Activated naive CD4-positive, alpha-beta T cell treated with anti-CD3 and anti-CD28 coated beads, Interleukin-2, amount 10 ng/mL, durations not matched to agents 7 days and 5 days (primary cell): ENCODE measurements at regions of chr17 and their contacts with region 1.

Region 1: DNA sequence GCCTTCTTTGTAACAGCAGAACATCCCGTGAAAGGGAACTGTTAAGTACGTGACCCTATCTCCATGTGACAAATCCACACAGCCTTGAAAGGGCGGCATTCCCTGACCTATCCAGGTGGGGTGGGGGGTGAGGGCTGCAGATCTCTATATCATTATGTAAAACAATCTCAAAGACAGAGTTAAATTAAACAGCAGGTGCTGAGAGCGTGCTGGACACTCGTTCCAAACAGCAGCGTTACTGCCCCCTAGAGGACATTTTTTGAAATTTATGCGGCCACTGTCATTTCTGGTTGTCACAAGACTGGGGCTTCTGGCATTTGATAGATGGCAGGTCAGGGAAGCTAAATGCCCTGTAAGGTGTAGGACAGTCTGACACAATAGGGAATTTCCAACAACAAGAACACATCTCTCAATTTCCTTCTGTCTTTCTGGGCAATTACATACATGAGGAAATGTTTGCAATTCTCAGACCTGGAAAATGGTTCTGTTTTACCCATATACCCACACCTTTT is 6.7 kb upstream of the SLC25A39 start:
- DNase-seq: peak; percentile 84
- H3K4me3 Mint-ChIP-seq: no peak overlapping the region
- H3K27ac Mint-ChIP-seq: no peak overlapping the region
- H3K4me1 Mint-ChIP-seq: peaks cover 19% of the 10 kb centered on the region
- H3K27me3 Mint-ChIP-seq: peaks cover 19% of the 10 kb centered on the region

Region 2: DNA sequence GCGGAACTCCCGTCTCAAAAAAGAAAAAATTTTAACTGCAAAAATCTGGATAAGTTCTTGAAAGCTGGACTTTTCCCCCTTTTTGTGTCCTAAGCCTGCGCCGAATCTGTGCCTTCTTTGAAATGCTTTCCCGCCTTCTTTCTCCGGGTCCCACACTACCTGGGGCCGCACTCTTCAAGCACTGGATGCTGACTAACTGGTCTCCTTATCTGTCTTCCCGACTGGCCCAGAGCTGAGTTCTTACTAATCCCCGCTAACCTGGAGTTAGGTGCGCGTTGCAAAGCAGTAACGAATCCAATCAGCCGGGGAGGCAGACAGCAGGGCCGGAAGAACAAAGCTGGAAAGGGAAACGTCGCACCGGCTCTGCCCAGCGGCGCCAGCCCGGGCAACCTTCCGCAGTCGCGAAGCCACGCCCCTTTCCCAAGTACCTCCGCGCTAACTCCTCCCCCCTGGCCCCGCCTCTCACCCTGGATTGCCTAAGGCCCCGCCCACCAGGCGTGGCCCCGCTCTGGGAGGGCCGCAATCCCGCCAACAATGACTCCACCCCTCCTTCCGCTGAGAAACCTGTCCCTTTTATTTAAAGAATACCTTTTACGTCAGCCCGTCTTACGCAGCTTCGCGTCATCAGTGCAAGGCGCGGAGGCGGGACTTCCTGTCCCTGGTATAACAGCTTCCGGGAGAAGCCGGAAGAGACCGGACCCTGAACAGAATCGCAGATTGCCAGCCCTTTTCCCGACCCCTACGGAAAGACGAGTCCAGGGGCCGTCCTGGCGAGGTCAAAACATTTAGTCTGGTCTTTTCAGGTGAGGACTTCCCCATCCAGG is 144.8 kb before region 1 on chr17 and contains the start of gene TMUB2:
- CTCF ChIA-PET with region 1: interaction called, 18 read pairs
- DNase-seq: peak; percentile 100
- H3K4me3 Mint-ChIP-seq: peak within 1 kb of the TSS; percentile 100
- H3K27ac Mint-ChIP-seq: peak within 1 kb of the TSS; percentile 97
- H3K4me1 Mint-ChIP-seq: peaks cover 51% of the 10 kb centered on the region
- H3K27me3 Mint-ChIP-seq: no peaks in the 10 kb centered on the region

Region 3: DNA sequence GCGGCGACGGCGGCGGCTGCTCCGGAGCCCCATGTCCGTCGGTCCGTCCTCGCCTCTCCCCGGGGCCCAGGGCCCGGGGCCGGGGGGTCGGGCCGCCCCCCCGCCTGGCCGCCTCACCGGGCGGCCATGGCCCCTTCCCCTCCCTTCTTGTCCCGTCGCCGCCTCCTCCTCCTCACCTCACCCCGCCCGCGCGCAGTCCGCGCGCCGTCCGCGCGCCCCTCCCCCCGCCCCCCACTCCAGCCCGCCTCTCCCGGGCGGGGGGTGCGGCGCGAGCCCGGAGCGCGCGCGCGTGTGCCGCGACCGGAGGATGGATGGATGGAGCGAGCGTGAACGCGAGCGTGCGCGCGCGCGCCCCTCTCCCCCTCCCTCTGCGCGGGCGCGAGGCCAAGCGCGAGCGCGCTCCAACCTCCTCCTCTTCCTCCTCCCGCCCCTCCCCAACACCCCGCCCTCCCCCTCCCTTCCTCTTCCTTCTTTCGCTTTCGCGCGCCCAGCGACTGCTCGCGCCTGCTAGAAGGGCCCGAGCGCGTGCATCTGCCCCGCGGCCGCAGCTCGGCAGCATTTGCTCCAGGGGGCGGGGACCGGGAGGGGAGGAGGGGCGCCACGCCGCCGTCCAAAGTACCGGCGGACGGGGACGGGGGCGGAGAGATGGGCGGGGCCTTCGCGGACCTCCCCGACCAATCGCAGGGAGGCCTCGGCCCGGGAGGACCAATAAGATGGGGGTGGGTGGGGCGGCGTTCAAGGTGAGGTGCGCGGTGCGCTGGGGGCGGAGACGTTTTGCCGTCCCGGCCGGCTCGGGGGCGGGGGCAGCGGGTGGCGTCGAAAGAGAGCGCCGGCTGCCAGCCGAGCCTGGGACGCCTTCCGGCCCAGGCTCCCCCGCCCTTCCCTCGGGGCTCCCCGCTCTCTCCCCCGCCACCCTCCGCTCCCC is 131.5 kb before region 1 on chr17 and contains the start of gene ATXN7L3:
- CTCF ChIA-PET with region 1: interaction called, 27 read pairs
- DNase-seq: peak; percentile 100
- H3K4me3 Mint-ChIP-seq: peak within 1 kb of the TSS; percentile 93
- H3K27ac Mint-ChIP-seq: peak within 1 kb of the TSS; percentile 99
- H3K4me1 Mint-ChIP-seq: peaks cover 57% of the 10 kb centered on the region
- H3K27me3 Mint-ChIP-seq: no peaks in the 10 kb centered on the region

Region 4: GRCh38 chr17:44210342-44211192 is 120.7 kb before region 1 on chr17:
- CTCF ChIA-PET with region 1: interaction called, 47 read pairs
- DNase-seq: peak; percentile 93
- H3K4me3 Mint-ChIP-seq: peak overlapping the region; percentile 53
- H3K27ac Mint-ChIP-seq: peak overlapping the region; percentile 85
- H3K4me1 Mint-ChIP-seq: peaks cover 59% of the 10 kb centered on the region
- H3K27me3 Mint-ChIP-seq: no peaks in the 10 kb centered on the region

Region 5: GRCh38 chr17:44218344-44219107 is 112.8 kb before region 1 on chr17:
- CTCF ChIA-PET with region 1: interaction called, 47 read pairs
- DNase-seq: peak; percentile 88
- H3K4me3 Mint-ChIP-seq: peak overlapping the region; percentile 88
- H3K27ac Mint-ChIP-seq: peak overlapping the region; percentile 88
- H3K4me1 Mint-ChIP-seq: peaks cover 48% of the 10 kb centered on the region
- H3K27me3 Mint-ChIP-seq: peaks cover 7% of the 10 kb centered on the region

Region 6: DNA sequence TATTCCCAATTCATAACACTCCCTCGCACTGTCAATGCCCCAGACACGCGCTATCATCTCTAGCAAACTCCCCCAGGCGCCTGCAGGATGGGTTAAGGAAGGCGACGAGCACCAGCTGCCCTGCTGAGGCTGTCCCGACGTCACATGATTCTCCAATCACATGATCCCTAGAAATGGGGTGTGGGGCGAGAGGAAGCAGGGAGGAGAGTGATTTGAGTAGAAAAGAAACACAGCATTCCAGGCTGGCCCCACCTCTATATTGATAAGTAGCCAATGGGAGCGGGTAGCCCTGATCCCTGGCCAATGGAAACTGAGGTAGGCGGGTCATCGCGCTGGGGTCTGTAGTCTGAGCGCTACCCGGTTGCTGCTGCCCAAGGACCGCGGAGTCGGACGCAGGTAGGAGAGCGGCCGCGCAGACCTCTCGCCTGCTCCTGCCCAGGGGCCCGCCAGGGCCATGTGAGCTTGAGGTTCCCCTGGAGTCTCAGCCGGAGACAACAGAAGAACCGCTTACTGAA is 13.7 kb after region 1 on chr17 and contains the start of gene GRN:
- CTCF ChIA-PET with region 1: interaction called, 18 read pairs
- DNase-seq: peak; percentile 93
- H3K4me3 Mint-ChIP-seq: peak within 1 kb of the TSS; percentile 87
- H3K27ac Mint-ChIP-seq: peak within 1 kb of the TSS; percentile 51
- H3K4me1 Mint-ChIP-seq: peaks cover 28% of the 10 kb centered on the region
- H3K27me3 Mint-ChIP-seq: peaks cover 31% of the 10 kb centered on the region

Region 7: GRCh38 chr17:44350733-44351226 is 19.5 kb after region 1 on chr17:
- CTCF ChIA-PET with region 1: interaction called, 18 read pairs
- DNase-seq: peak; percentile 83
- H3K4me3 Mint-ChIP-seq: no peak overlapping the region
- H3K27ac Mint-ChIP-seq: no peak overlapping the region
- H3K4me1 Mint-ChIP-seq: peaks cover 18% of the 10 kb centered on the region
- H3K27me3 Mint-ChIP-seq: peaks cover 17% of the 10 kb centered on the region

Region 8: GRCh38 chr17:44363613-44364159 is 32.4 kb after region 1 on chr17 and contains the start of gene FAM171A2:
- CTCF ChIA-PET with region 1: no interaction called
- DNase-seq: peak; percentile 74
- H3K4me3 Mint-ChIP-seq: peak within 1 kb of the TSS; percentile 76
- H3K27ac Mint-ChIP-seq: no peak within 1 kb of the TSS
- H3K4me1 Mint-ChIP-seq: peaks cover 2% of the 10 kb centered on the region
- H3K27me3 Mint-ChIP-seq: peaks cover 89% of the 10 kb centered on the region